ENCODE measurements at regions of chr1 and their contacts with region 1.

Region 1: GRCh38 chr1:109532365-109533136 is 7.1 kb upstream of the GPR61 start:
- DNase-seq: peak; percentile 93
- ATAC-seq: peak; percentile 78
- H3K4me3 Mint-ChIP-seq: peak overlapping the region; percentile 55
- H3K27ac Mint-ChIP-seq: peak overlapping the region; percentile 80
- H3K4me1 Mint-ChIP-seq: peaks cover 30% of the 10 kb centered on the region
- H3K27me3 Mint-ChIP-seq: no peaks in the 10 kb centered on the region

Region 2: GRCh38 chr1:109397538-109398342 is 134.8 kb before region 1 on chr1 and contains the start of gene SORT1:
- POLR2A ChIA-PET with region 1: interaction called, 12 read pairs
- DNase-seq: peak; percentile 82
- ATAC-seq: peak; percentile 98
- H3K4me3 Mint-ChIP-seq: peak within 1 kb of the TSS; percentile 87
- H3K27ac Mint-ChIP-seq: no peak within 1 kb of the TSS
- H3K4me1 Mint-ChIP-seq: peaks cover 30% of the 10 kb centered on the region
- H3K27me3 Mint-ChIP-seq: peaks cover 32% of the 10 kb centered on the region
- total RNA-seq, gene SORT1: 6.5 to 11.0 TPM

Region 3: GRCh38 chr1:109426278-109427170 is 106.0 kb before region 1 on chr1 and contains the start of gene PSMA5:
- POLR2A ChIA-PET with region 1: interaction called, 16 read pairs
- DNase-seq: peak; percentile 89
- ATAC-seq: peak; percentile 93
- H3K4me3 Mint-ChIP-seq: peak within 1 kb of the TSS; percentile 93
- H3K27ac Mint-ChIP-seq: peak within 1 kb of the TSS; percentile 97
- H3K4me1 Mint-ChIP-seq: peaks cover 27% of the 10 kb centered on the region
- H3K27me3 Mint-ChIP-seq: no peaks in the 10 kb centered on the region
- total RNA-seq, gene PSMA5: 135 TPM

Region 4: GRCh38 chr1:109472779-109473178 is 59.8 kb before region 1 on chr1:
- POLR2A ChIA-PET with region 1: no interaction called
- DNase-seq: no peak
- ATAC-seq: no peak
- H3K4me3 Mint-ChIP-seq: no peak overlapping the region
- H3K27ac Mint-ChIP-seq: no peak overlapping the region
- H3K4me1 Mint-ChIP-seq: peaks cover 2% of the 10 kb centered on the region
- H3K27me3 Mint-ChIP-seq: peaks cover 58% of the 10 kb centered on the region

Region 5: DNA sequence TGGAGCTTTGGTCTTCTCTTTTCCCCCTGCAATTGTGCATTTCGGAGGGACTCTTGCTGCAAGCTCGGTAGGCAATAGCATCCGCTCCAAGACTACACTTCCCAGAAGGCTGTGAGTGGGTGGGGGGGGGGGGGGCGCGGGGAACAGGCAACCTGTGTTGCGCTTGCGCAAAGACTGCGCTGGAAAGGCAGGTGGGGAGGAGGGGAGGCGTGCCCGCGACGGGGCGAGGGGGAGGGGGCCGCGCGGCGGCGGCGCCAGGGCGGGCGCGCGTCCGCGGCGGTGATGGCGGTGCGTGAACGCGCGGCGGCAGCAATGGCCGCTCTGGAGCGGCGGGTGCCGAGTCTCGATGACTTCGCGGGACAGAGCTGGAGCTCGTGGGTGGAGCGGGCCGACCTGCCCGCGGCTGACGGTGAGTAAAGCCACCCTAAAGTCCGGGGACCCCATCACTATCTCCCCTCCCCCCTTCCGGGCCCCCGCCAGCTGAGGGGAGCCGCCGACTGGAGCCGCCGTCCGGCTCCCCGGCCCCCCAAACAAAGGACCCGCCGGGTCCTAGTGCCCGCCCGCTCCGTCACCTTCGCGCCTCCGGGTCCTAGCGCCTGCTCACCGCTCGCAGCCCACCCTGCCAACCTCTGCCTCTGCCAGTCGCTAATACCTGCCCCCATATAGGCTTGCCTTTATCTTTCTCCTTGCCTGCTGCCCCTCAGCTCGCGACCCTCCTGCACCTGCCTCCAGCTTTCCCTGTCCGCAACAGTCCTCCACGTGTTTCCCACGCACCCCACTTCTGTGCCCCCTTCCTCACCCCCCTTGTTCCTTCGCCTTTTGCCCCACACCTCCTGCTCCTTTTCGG is 48.7 kb before region 1 on chr1 and contains the start of gene ATXN7L2:
- POLR2A ChIA-PET with region 1: interaction called, 212 read pairs
- DNase-seq: peak; percentile 95
- ATAC-seq: peak; percentile 83
- H3K4me3 Mint-ChIP-seq: peak within 1 kb of the TSS; percentile 96
- H3K27ac Mint-ChIP-seq: peak within 1 kb of the TSS; percentile 93
- H3K4me1 Mint-ChIP-seq: peaks cover 28% of the 10 kb centered on the region
- H3K27me3 Mint-ChIP-seq: peaks cover 12% of the 10 kb centered on the region
- total RNA-seq, gene ATXN7L2: 10.4 to 12.4 TPM

Region 6: GRCh38 chr1:109493805-109494539 is 38.6 kb before region 1 on chr1 and contains the start of gene CYB561D1:
- POLR2A ChIA-PET with region 1: interaction called, 212 read pairs
- DNase-seq: peak; percentile 98
- ATAC-seq: peak; percentile 84
- H3K4me3 Mint-ChIP-seq: peak within 1 kb of the TSS; percentile 99
- H3K27ac Mint-ChIP-seq: peak within 1 kb of the TSS; percentile 86
- H3K4me1 Mint-ChIP-seq: peaks cover 34% of the 10 kb centered on the region
- H3K27me3 Mint-ChIP-seq: no peaks in the 10 kb centered on the region
- total RNA-seq, gene CYB561D1: 24.3 to 25.1 TPM

Region 7: GRCh38 chr1:109509176-109510134 is 23.1 kb before region 1 on chr1 and contains the start of gene AMIGO1:
- POLR2A ChIA-PET with region 1: interaction called, 212 read pairs
- DNase-seq: peak; percentile 79
- ATAC-seq: peak; percentile 50
- H3K4me3 Mint-ChIP-seq: peak within 1 kb of the TSS; percentile 91
- H3K27ac Mint-ChIP-seq: peak within 1 kb of the TSS; percentile 64
- H3K4me1 Mint-ChIP-seq: peaks cover 45% of the 10 kb centered on the region
- H3K27me3 Mint-ChIP-seq: peaks cover 22% of the 10 kb centered on the region
- total RNA-seq, gene AMIGO1: 8.2 to 9.4 TPM

Measured in activated naive CD8-positive, alpha-beta T cell treated with anti-CD3 and anti-CD28 coated beads, Interleukin-2, amount 10 ng/mL, durations not matched to agents 7 days and 5 days (primary cell).